ENCODE measurements at regions of chr7 and their contacts with region 1.

Region 1: GRCh38 chr7:40859965-40860543 is 725.2 kb downstream of the SUGCT start:
- DNase-seq: no peak
- H3K4me3 ChIP-seq: no peak overlapping the region
- H3K27ac ChIP-seq: no peak overlapping the region
- H3K4me1 ChIP-seq: no peaks in the 10 kb centered on the region
- H3K27me3 ChIP-seq: no peaks in the 10 kb centered on the region
- CTCF ChIP-seq: no peak
- EP300 ChIP-seq: no peak
- POLR2A ChIP-seq: no peak

Region 2: DNA sequence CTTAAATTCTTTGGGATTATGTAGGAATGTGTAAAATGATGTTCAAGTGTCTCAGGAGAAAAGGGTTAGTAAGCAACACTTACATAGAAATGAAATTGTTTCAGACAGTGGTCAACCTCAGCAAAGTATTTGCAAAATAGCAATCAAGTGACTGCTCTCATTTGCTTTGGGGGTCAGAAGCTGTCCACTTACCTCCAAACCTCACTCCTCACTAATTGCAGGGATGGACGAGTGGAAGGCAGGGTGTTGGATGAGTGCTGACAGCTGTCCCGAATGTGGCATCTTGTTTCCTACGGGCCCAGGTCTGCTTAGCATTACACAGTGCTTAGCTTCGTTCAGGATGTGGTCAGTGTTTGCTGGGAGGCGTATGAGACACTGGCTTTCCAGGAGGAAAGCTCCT is 288.3 kb before region 1 on chr7:
- intact Hi-C with region 1: loop called in 1 of 4 experiments (anchors 5 kb)
- DNase-seq: no peak
- H3K4me3 ChIP-seq: no peak overlapping the region
- H3K27ac ChIP-seq: no peak overlapping the region
- H3K4me1 ChIP-seq: peaks cover 3% of the 10 kb centered on the region
- H3K27me3 ChIP-seq: no peaks in the 10 kb centered on the region
- CTCF ChIP-seq: no peak
- EP300 ChIP-seq: no peak
- POLR2A ChIP-seq: no peak